SK-N-SH (cell line): ENCODE measurements at regions of chr12 and their contacts with region 1.

Region 1: GRCh38 chr12:124518051-124518932 is 49.1 kb downstream of the NCOR2 start:
- DNase-seq: peak; percentile 90
- H3K4me3 ChIP-seq: peak overlapping the region; percentile 57 to 76
- H3K27ac ChIP-seq: peak overlapping the region; percentile 90 to 99
- H3K4me1 ChIP-seq: peaks cover 41 to 76% of the 10 kb centered on the region in 2 experiments
- H3K27me3 ChIP-seq: no peaks in the 10 kb centered on the region
- CTCF ChIP-seq: no peak
- EP300 ChIP-seq: 0 out of 4 replicates have a peak, but pooled peaks of 1 of the 2 experiments have one; percentile 14
- RAD21 ChIP-seq: peak; percentile 24; the same call in 1 of the 2 replicates

Region 2: GRCh38 chr12:124379938-124380754 is 138.1 kb before region 1 on chr12:
- CTCF ChIA-PET with region 1: no interaction called
- POLR2A ChIA-PET with region 1: no interaction called
- DNase-seq: no peak
- H3K4me3 ChIP-seq: no peak overlapping the region
- H3K27ac ChIP-seq: peak overlapping the region; percentile 71 to 95
- H3K4me1 ChIP-seq: peaks cover 22 to 44% of the 10 kb centered on the region in 2 experiments; a peak in 3 of 4 replicates
- H3K27me3 ChIP-seq: no peaks in the 10 kb centered on the region
- CTCF ChIP-seq: peak; percentile 51
- EP300 ChIP-seq: peak in 1 of 2 experiments; percentile 61; a peak in 2 of 4 replicates
- RAD21 ChIP-seq: no peak; the same call in 1 of the 2 replicates

Region 3: DNA sequence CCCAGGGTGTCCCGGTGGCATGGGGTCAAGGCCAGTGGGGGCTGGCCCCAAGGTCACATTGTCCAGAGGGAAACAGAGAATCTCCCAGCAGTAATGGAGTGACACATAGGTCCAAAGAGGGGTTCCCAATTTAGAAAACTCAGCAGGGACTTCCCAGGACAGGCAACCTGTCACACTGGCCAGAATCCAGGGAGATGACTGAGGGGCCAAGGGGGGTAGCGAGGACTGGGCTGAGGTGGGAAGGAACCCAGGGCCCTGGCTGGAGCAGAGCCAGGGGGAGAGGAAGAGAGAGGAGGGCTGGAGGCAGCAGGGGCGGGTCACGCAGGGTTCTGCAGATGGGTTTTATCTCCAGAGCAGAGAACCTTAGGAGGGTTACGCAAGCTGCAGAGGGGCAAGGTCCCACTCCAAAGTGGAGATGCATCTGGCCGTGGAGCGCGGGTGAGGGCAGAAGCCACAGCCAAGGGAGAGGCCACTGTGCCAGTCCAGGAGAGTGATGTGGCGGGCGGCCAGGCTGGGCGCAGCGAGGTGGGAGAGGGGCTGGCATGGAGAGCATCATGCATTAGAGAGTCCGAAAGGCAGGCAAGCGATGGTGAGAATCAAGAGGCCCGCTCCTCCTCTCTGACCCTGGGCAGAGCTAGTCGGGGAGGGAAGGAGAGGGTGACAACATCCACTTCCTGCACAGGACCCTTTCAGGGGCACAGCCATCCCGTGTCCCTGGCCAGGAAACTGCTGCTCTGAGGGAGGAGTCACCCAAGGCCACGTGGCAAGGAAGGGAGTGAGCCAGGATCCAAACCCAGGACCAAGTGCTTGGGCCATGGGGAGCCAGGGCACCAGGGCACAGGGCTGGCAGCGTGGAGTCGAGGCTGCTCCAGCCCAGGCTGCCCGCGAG is 20.1 kb after region 1 on chr12:
- CTCF ChIA-PET with region 1: interaction called, 6 read pairs
- POLR2A ChIA-PET with region 1: interaction called, 14 read pairs
- DNase-seq: peak; percentile 72
- H3K4me3 ChIP-seq: no peak overlapping the region
- H3K27ac ChIP-seq: peak overlapping the region; percentile 15 to 96; a peak in 3 of 4 replicates
- H3K4me1 ChIP-seq: peaks cover 23 to 77% of the 10 kb centered on the region in 2 experiments; a peak in 3 of 4 replicates
- H3K27me3 ChIP-seq: no peaks in the 10 kb centered on the region
- CTCF ChIP-seq: no peak
- EP300 ChIP-seq: peak in 1 of 2 experiments; percentile 12; a peak in 1 of 4 replicates
- RAD21 ChIP-seq: no peak

Region 4: GRCh38 chr12:124744659-124745469 is 226.6 kb after region 1 on chr12:
- CTCF ChIA-PET with region 1: no interaction called
- POLR2A ChIA-PET with region 1: no interaction called
- DNase-seq: peak; percentile 79
- H3K4me3 ChIP-seq: no peak overlapping the region
- H3K27ac ChIP-seq: peak overlapping the region; percentile 83 to 94; a peak in 3 of 4 replicates
- H3K4me1 ChIP-seq: peaks cover 13 to 27% of the 10 kb centered on the region in 2 experiments; a peak in 3 of 4 replicates
- H3K27me3 ChIP-seq: no peaks in the 10 kb centered on the region
- CTCF ChIP-seq: no peak
- EP300 ChIP-seq: no peak
- RAD21 ChIP-seq: no peak